AG04449 (cell line): ENCODE measurements at regions of chr3 and their contacts with region 1.

Region 1: GRCh38 chr3:51955893-51956770 is 951 bp downstream of the GPR62 start:
- DNase-seq: no peak
- H3K4me3 ChIP-seq: no peak overlapping the region
- CTCF ChIP-seq: peak; percentile 47

Region 2: DNA sequence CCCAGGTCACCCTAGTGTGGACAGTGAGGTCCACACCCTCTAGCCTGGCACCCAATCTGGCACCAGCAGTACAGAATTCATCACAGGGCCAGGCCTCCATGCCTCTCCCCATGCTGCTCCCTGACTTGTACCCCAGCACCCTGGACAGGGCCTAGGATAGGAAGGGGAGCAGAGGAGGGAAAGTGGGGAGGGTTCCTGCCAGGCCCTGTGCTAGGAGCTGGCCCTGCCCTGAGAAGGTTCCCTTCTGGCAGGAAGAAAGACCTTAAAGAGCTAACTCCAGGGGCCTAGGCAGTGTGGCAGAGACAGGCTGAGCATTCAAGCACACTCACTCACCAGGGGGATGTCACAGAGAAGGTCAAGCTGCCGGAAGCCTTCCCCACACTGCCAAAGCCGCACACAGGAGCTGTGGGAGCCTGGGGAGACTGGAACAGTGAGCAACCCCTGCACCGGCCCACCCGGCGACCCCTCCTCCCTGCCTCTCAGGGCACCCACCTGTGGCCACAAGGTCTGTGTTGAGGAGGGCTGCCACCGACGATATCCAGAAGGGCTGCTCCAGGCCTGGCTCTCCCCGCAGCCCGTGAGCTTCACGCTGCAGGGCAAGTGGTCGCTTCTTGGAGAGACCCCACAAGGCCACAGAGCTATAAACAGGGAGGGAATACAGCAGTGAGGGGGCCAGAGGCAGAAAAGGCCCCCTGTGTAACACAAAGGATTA is 21.8 kb before region 1 on chr3:
- CTCF ChIA-PET with region 1: no interaction called
- POLR2A ChIA-PET with region 1: no interaction called
- DNase-seq: no peak
- H3K4me3 ChIP-seq: no peak overlapping the region
- CTCF ChIP-seq: no peak

Region 3: GRCh38 chr3:51967384-51968169 is 11.4 kb after region 1 on chr3 and contains the start of gene PCBP4:
- CTCF ChIA-PET with region 1: interaction called, 67 read pairs
- POLR2A ChIA-PET with region 1: no interaction called
- DNase-seq: no peak
- H3K4me3 ChIP-seq: peak within 1 kb of the TSS; percentile 80
- CTCF ChIP-seq: no peak

Region 4: GRCh38 chr3:51974963-51975851 is 19.1 kb after region 1 on chr3 and contains the start of gene ABHD14A:
- CTCF ChIA-PET with region 1: interaction called, 67 read pairs
- POLR2A ChIA-PET with region 1: interaction called, 4 read pairs
- DNase-seq: no peak
- H3K4me3 ChIP-seq: peak within 1 kb of the TSS; percentile 89
- CTCF ChIP-seq: no peak

Region 5: GRCh38 chr3:52238761-52239701 is 282.9 kb after region 1 on chr3 and contains the start of gene TWF2:
- CTCF ChIA-PET with region 1: no interaction called
- POLR2A ChIA-PET with region 1: no interaction called
- DNase-seq: no peak
- H3K4me3 ChIP-seq: peak within 1 kb of the TSS; percentile 95
- CTCF ChIP-seq: peak; percentile 43